SK-N-SH (cell line): ENCODE measurements at regions of chr15 and their contacts with region 1.

Region 1: GRCh38 chr15:65032801-65033537 is 3.5 kb upstream of the MTFMT start:
- DNase-seq: peak; percentile 44
- H3K4me3 ChIP-seq: no peak overlapping the region; a peak in 1 of 4 replicates
- H3K27ac ChIP-seq: no peak overlapping the region
- H3K4me1 ChIP-seq: peaks cover 0 to 6% of the 10 kb centered on the region in 2 experiments; a peak in 2 of 4 replicates
- H3K27me3 ChIP-seq: no peaks in the 10 kb centered on the region
- CTCF ChIP-seq: peak; percentile 37
- EP300 ChIP-seq: no peak
- RAD21 ChIP-seq: peak; percentile 52

Region 2: DNA sequence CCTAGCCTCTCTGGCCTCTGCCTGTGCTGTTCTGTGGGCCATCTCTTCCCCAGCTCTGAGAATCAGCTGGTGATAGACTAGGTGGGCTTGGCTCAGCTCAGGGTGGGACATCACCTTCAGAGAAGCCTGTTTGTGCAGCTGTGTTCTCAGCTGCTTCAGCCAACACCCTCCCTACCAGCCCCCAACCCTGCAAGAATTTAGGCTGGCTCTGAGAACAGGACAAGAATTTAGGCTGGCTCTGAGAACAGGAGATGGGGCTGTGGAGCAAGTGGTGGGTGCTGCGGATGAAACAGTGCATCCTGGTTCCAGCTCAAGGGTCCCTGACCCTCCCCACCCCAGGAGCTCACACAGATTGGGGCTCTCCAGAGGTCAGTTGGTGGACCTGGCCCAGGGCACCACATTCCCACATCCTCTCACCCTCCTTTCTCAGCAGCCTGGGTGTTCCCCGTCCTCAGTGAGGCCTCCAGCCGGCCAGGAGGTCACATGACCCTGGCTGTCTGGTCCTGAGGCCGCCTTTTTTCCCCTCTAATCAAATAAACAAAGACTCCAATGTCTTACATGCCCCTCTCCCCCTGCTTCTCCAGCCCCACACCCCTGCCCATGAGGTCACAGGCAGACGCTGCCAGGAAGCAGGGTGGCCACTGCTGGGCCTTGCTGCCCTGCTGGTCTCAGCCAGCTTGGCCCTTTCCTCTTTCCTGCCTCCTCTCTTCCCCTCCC is 176.4 kb before region 1 on chr15:
- CTCF ChIA-PET with region 1: no interaction called
- POLR2A ChIA-PET with region 1: no interaction called
- DNase-seq: peak; percentile 80
- H3K4me3 ChIP-seq: no peak overlapping the region
- H3K27ac ChIP-seq: peak overlapping the region; percentile 74 to 88
- H3K4me1 ChIP-seq: peaks cover 27 to 43% of the 10 kb centered on the region in 2 experiments; a peak in 3 of 4 replicates
- H3K27me3 ChIP-seq: no peaks in the 10 kb centered on the region
- CTCF ChIP-seq: no peak
- EP300 ChIP-seq: no peak
- RAD21 ChIP-seq: 0 out of 2 replicates have a peak, but pooled peaks have one; percentile 4

Region 3: DNA sequence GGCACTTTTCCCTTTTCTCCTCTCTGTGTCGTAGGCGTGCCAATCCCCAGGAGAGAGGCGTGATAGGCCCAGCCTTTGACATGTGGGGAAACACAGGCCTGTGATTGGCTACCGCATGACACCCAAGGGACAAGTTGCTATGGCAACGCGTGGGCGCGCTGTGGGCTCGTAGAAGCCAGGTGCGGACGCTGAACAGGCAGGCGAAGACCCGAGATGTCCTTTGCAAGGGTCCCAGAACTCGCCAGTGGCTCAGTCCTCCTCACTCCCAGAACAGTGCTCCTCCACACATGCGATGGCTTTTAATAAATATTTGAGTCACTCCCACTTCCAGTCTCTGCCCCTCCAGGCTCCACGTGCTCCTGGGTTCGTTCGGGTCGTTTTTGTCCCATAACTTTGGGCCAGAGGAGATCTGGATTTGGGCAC is 16.5 kb after region 1 on chr15:
- CTCF ChIA-PET with region 1: interaction called, 21 read pairs
- POLR2A ChIA-PET with region 1: no interaction called
- DNase-seq: peak; percentile 96
- H3K4me3 ChIP-seq: peak overlapping the region; percentile 48 to 71
- H3K27ac ChIP-seq: no peak overlapping the region
- H3K4me1 ChIP-seq: peaks cover 0 to 14% of the 10 kb centered on the region in 2 experiments; a peak in 1 of 4 replicates
- H3K27me3 ChIP-seq: no peaks in the 10 kb centered on the region
- CTCF ChIP-seq: no peak
- EP300 ChIP-seq: no peak
- RAD21 ChIP-seq: no peak

Region 4: GRCh38 chr15:65054333-65055200 is 21.6 kb after region 1 on chr15:
- CTCF ChIA-PET with region 1: interaction called, 12 read pairs
- POLR2A ChIA-PET with region 1: interaction called, 3 read pairs
- DNase-seq: peak; percentile 92
- H3K4me3 ChIP-seq: no peak overlapping the region; a peak in 1 of 4 replicates
- H3K27ac ChIP-seq: no peak overlapping the region; a peak in 1 of 4 replicates
- H3K4me1 ChIP-seq: peaks cover 0 to 9% of the 10 kb centered on the region in 2 experiments; a peak in 1 of 4 replicates
- H3K27me3 ChIP-seq: no peaks in the 10 kb centered on the region
- CTCF ChIP-seq: peak; percentile 87
- EP300 ChIP-seq: no peak
- RAD21 ChIP-seq: peak; percentile 93

Region 5: GRCh38 chr15:65077981-65078352 is 45.0 kb after region 1 on chr15:
- CTCF ChIA-PET with region 1: interaction called, 10 read pairs
- POLR2A ChIA-PET with region 1: no interaction called
- DNase-seq: peak; percentile 61
- H3K4me3 ChIP-seq: no peak overlapping the region
- H3K27ac ChIP-seq: no peak overlapping the region
- H3K4me1 ChIP-seq: peaks cover 0 to 3% of the 10 kb centered on the region in 2 experiments; a peak in 1 of 4 replicates
- H3K27me3 ChIP-seq: 0 out of 2 replicates have a peak, but pooled peaks cover 6% of the 10 kb centered on the region
- CTCF ChIP-seq: peak; percentile 49
- EP300 ChIP-seq: no peak
- RAD21 ChIP-seq: 0 out of 2 replicates have a peak, but pooled peaks have one; percentile 21

Region 6: GRCh38 chr15:65086017-65086679 is 53.2 kb after region 1 on chr15:
- CTCF ChIA-PET with region 1: interaction called, 11 read pairs
- POLR2A ChIA-PET with region 1: no interaction called
- DNase-seq: peak; percentile 69
- H3K4me3 ChIP-seq: no peak overlapping the region
- H3K27ac ChIP-seq: no peak overlapping the region
- H3K4me1 ChIP-seq: peaks cover 0 to 35% of the 10 kb centered on the region in 2 experiments; a peak in 1 of 4 replicates
- H3K27me3 ChIP-seq: no peaks in the 10 kb centered on the region
- CTCF ChIP-seq: peak; percentile 57
- EP300 ChIP-seq: no peak
- RAD21 ChIP-seq: peak; percentile 56

Region 7: GRCh38 chr15:65101411-65101890 is 68.5 kb after region 1 on chr15:
- CTCF ChIA-PET with region 1: interaction called, 19 read pairs
- POLR2A ChIA-PET with region 1: no interaction called
- DNase-seq: peak; percentile 78
- H3K4me3 ChIP-seq: no peak overlapping the region; a peak in 1 of 4 replicates
- H3K27ac ChIP-seq: no peak overlapping the region
- H3K4me1 ChIP-seq: no peaks in the 10 kb centered on the region
- H3K27me3 ChIP-seq: no peaks in the 10 kb centered on the region
- CTCF ChIP-seq: peak; percentile 74
- EP300 ChIP-seq: no peak
- RAD21 ChIP-seq: peak; percentile 80

Region 8: GRCh38 chr15:65249641-65250040 is 216.7 kb after region 1 on chr15:
- CTCF ChIA-PET with region 1: no interaction called
- POLR2A ChIA-PET with region 1: no interaction called
- DNase-seq: no peak
- H3K4me3 ChIP-seq: no peak overlapping the region
- H3K27ac ChIP-seq: no peak overlapping the region
- H3K4me1 ChIP-seq: peaks cover 0 to 2% of the 10 kb centered on the region in 2 experiments; a peak in 1 of 4 replicates
- H3K27me3 ChIP-seq: no peaks in the 10 kb centered on the region
- CTCF ChIP-seq: no peak
- EP300 ChIP-seq: no peak
- RAD21 ChIP-seq: no peak